Calu3 (cell line): ENCODE measurements at regions of chr6 and their contacts with region 1.

Region 1: DNA sequence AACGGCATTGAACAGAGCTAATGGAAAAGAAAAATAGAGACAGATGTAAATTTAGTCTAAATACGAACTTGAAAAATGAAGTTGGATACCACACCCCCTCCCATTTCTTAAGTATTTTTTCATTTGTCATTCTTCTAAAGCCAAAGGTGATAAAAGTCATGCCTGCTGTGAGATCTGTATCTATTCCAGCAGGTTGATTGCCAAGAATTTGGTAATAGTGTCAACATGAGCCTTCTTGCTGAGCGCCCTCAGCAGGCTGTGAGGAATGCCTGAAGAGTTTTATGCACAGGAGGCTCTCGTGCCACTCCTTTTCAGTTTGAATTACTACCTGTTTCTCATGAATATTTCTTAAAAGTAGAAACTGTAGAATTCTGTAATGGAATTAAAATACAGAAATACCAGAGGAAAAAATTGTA is 165.4 kb downstream of the QKI start:
- DNase-seq: no peak
- H3K4me3 Mint-ChIP-seq: no peak overlapping the region
- H3K27ac Mint-ChIP-seq: peak overlapping the region; percentile 52
- H3K4me1 Mint-ChIP-seq: peaks cover 24% of the 10 kb centered on the region
- H3K27me3 Mint-ChIP-seq: no peaks in the 10 kb centered on the region
- CTCF ChIP-seq: no peak

Region 2: DNA sequence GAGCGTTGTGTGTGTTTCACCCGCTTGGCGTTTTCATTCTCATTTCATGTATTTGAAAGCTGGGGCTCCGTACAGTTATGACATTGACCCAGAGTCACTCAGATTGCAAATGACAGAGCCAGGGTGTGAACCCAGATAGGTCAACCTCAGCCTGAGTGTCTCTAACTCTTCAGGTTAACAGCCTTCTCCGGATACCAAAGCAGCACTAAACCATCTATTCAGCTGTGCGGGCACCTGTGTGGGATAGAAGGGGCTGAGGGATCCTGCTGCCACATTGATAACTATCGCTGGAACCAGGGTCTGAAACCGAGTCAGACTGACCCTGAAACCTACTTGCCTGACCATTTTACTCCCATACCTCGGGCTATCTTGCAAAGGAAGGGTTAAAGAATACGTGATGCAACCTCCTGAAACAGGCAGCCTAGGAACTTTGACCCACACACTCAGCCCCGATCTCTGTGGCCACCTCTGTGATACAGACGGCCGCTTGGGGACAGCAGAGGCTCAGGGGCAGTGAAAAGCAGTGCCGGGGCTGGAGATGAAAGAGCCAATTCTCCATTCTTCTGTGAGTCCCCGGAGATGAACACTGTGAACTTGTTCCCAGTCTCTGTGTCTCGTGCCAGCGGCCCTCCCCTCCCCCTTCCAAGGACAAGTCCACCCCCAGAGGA is 398.9 kb before region 1 on chr6:
- CTCF ChIA-PET with region 1: no interaction called
- intact Hi-C with region 1: loop called (anchors 10 kb)
- DNase-seq: peak; percentile 84
- H3K4me3 Mint-ChIP-seq: no peak overlapping the region
- H3K27ac Mint-ChIP-seq: peak overlapping the region; percentile 97
- H3K4me1 Mint-ChIP-seq: peaks cover 23% of the 10 kb centered on the region
- H3K27me3 Mint-ChIP-seq: no peaks in the 10 kb centered on the region
- CTCF ChIP-seq: peak; percentile 74

Region 3: DNA sequence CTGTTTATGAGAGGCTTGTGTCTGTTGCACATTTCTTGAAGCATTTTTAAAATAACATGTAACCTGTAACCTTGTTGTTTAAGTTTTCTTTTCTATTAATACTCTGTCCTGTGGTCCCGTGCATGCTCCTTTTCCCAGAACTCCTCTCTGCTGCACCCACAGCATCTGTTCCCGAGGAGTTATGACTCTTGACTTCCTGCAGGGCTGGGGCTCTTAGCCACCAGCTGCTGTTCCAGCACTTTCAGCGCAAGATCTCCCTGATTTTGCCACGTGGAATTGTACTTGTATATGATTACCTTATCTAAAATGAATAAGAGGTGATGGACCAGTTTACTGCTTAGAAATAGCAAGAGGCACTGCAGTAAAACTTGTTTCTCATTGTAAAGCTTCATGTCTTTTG is 14.7 kb before region 1 on chr6:
- CTCF ChIA-PET with region 1: no interaction called
- intact Hi-C with region 1: no loop called
- DNase-seq: no peak
- H3K4me3 Mint-ChIP-seq: no peak overlapping the region
- H3K27ac Mint-ChIP-seq: no peak overlapping the region
- H3K4me1 Mint-ChIP-seq: peaks cover 8% of the 10 kb centered on the region
- H3K27me3 Mint-ChIP-seq: no peaks in the 10 kb centered on the region
- CTCF ChIP-seq: no peak

Region 4: GRCh38 chr6:163688739-163689362 is 109.0 kb after region 1 on chr6:
- CTCF ChIA-PET with region 1: no interaction called
- intact Hi-C with region 1: no loop called
- DNase-seq: no peak
- H3K4me3 Mint-ChIP-seq: no peak overlapping the region
- H3K27ac Mint-ChIP-seq: no peak overlapping the region
- H3K4me1 Mint-ChIP-seq: no peaks in the 10 kb centered on the region
- H3K27me3 Mint-ChIP-seq: no peaks in the 10 kb centered on the region
- CTCF ChIP-seq: no peak